Activated CD4-positive, alpha-beta memory T cell treated with anti-CD3 and anti-CD28 coated beads for 36 hours (primary cell): ENCODE measurements at regions of chr14 and their contacts with region 1.

Region 1: GRCh38 chr14:49892636-49893308 is at the start of gene ARF6:
- DNase-seq: peak; percentile 98
- H3K4me3 Mint-ChIP-seq: peak within 1 kb of the TSS; percentile 90
- H3K27ac Mint-ChIP-seq: peak within 1 kb of the TSS; percentile 93
- H3K4me1 Mint-ChIP-seq: peaks cover 18% of the 10 kb centered on the region
- H3K27me3 Mint-ChIP-seq: no peaks in the 10 kb centered on the region
- total RNA-seq, gene ARF6: 198 to 202 TPM

Region 2: GRCh38 chr14:49620182-49621113 is 272.3 kb before region 1 on chr14 and contains the starts of genes MGAT2 and RPL36AL:
- CTCF ChIA-PET with region 1: no interaction called
- POLR2A ChIA-PET with region 1: interaction called, 6 read pairs
- intact Hi-C with region 1: loop called (anchors 2 kb)
- DNase-seq: peak; percentile 98
- H3K4me3 Mint-ChIP-seq: peak within 1 kb of the TSS; percentile 96
- H3K27ac Mint-ChIP-seq: peak within 1 kb of the TSS; percentile 96
- H3K4me1 Mint-ChIP-seq: peaks cover 39% of the 10 kb centered on the region
- H3K27me3 Mint-ChIP-seq: no peaks in the 10 kb centered on the region
- total RNA-seq, gene MGAT2: 40.4 to 43.7 TPM
- total RNA-seq, gene RPL36AL: 314 to 320 TPM

Region 3: GRCh38 chr14:49930720-49931119 is 37.9 kb after region 1 on chr14:
- CTCF ChIA-PET with region 1: no interaction called
- POLR2A ChIA-PET with region 1: no interaction called
- intact Hi-C with region 1: no loop called
- DNase-seq: no peak
- H3K4me3 Mint-ChIP-seq: peak overlapping the region; percentile 5
- H3K27ac Mint-ChIP-seq: no peak overlapping the region
- H3K4me1 Mint-ChIP-seq: peaks cover 7% of the 10 kb centered on the region
- H3K27me3 Mint-ChIP-seq: no peaks in the 10 kb centered on the region

Region 4: GRCh38 chr14:49971156-49972130 is 78.7 kb after region 1 on chr14:
- CTCF ChIA-PET with region 1: no interaction called
- POLR2A ChIA-PET with region 1: interaction called, 32 read pairs
- intact Hi-C with region 1: loop called (anchors 1 kb)
- DNase-seq: peak; percentile 78
- H3K4me3 Mint-ChIP-seq: peak overlapping the region; percentile 62
- H3K27ac Mint-ChIP-seq: peak overlapping the region; percentile 95
- H3K4me1 Mint-ChIP-seq: peaks cover 61% of the 10 kb centered on the region
- H3K27me3 Mint-ChIP-seq: no peaks in the 10 kb centered on the region

Region 5: DNA sequence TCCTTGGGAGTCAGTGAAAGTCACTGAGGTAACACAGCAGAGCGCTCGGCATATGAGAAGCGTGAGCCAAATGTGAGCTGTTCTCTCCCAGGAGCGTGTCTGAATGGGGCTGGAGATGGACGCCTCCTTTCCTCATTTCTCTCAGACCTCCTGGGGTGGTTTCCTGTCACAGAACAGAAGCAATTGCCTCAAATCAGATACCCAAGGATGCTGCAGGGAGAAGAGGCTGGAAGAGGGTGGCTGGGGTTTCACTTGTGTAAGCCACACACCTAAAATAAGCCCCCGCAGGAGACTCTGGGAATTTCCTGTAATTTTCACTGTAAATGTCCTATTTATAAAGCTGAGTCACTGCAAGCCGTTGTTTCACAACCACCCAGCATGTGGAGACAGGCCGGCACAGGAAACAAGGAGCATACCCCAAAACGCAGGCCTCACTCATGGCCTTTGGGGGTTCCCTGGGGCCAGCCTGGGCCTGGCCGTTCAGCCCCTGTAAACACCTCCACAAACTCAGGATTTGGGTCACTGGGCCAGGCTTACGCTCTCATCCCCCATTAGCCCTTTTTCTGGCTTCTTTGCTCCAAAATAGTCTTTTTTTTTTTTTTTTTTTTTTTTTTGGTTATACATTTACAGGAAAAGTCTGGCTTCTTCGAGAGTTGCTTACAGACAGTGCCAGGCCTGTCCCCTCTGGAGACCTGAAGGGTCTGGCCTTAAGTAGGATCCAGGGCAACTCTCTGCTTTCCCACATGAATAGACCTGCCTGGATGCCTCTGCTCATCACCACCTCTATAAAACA is 168.3 kb after region 1 on chr14:
- CTCF ChIA-PET with region 1: interaction called, 7 read pairs
- POLR2A ChIA-PET with region 1: interaction called, 25 read pairs
- intact Hi-C with region 1: loop called (anchors 1 kb)
- DNase-seq: peak; percentile 71
- H3K4me3 Mint-ChIP-seq: peak overlapping the region; percentile 96
- H3K27ac Mint-ChIP-seq: peak overlapping the region; percentile 99
- H3K4me1 Mint-ChIP-seq: peaks cover 73% of the 10 kb centered on the region
- H3K27me3 Mint-ChIP-seq: no peaks in the 10 kb centered on the region

Region 6: GRCh38 chr14:50116181-50116956 is 223.6 kb after region 1 on chr14 and contains the start of gene VCPKMT:
- CTCF ChIA-PET with region 1: no interaction called
- POLR2A ChIA-PET with region 1: interaction called, 5 read pairs
- intact Hi-C with region 1: loop called (anchors 1 kb)
- DNase-seq: peak; percentile 96
- H3K4me3 Mint-ChIP-seq: peak within 1 kb of the TSS; percentile 98
- H3K27ac Mint-ChIP-seq: peak within 1 kb of the TSS; percentile 95
- H3K4me1 Mint-ChIP-seq: peaks cover 37% of the 10 kb centered on the region
- H3K27me3 Mint-ChIP-seq: no peaks in the 10 kb centered on the region
- total RNA-seq, gene VCPKMT: 7.7 to 10.1 TPM

Region 7: GRCh38 chr14:50520947-50521815 is 628.4 kb after region 1 on chr14:
- CTCF ChIA-PET with region 1: no interaction called
- POLR2A ChIA-PET with region 1: no interaction called
- intact Hi-C with region 1: loop called (anchors 2 kb)
- DNase-seq: peak; percentile 84
- H3K4me3 Mint-ChIP-seq: peak overlapping the region; percentile 25
- H3K27ac Mint-ChIP-seq: peak overlapping the region; percentile 85
- H3K4me1 Mint-ChIP-seq: peaks cover 56% of the 10 kb centered on the region
- H3K27me3 Mint-ChIP-seq: no peaks in the 10 kb centered on the region